Activated CD8-positive, alpha-beta T cell treated with anti-CD3 and anti-CD28 coated beads for 36 hours (primary cell): ENCODE measurements at regions of chr5 and their contacts with region 1.

Region 1: GRCh38 chr5:14415024-14415697 is 166.4 kb upstream of the OTULINL start:
- DNase-seq: peak; percentile 85
- ATAC-seq: peak; percentile 58
- H3K4me3 Mint-ChIP-seq: peak overlapping the region; percentile 67
- H3K27ac Mint-ChIP-seq: peak overlapping the region; percentile 98
- H3K4me1 Mint-ChIP-seq: peaks cover 57% of the 10 kb centered on the region
- H3K27me3 Mint-ChIP-seq: no peaks in the 10 kb centered on the region
- CTCF ChIP-seq: no peak

Region 2: GRCh38 chr5:14035859-14036440 is 379.2 kb before region 1 on chr5:
- CTCF ChIA-PET with region 1: no interaction called
- POLR2A ChIA-PET with region 1: no interaction called
- intact Hi-C with region 1: no loop called
- DNase-seq: no peak
- ATAC-seq: no peak
- H3K4me3 Mint-ChIP-seq: no peak overlapping the region
- H3K27ac Mint-ChIP-seq: no peak overlapping the region
- H3K4me1 Mint-ChIP-seq: peaks cover 3% of the 10 kb centered on the region
- H3K27me3 Mint-ChIP-seq: peaks cover 10% of the 10 kb centered on the region
- CTCF ChIP-seq: no peak

Region 3: DNA sequence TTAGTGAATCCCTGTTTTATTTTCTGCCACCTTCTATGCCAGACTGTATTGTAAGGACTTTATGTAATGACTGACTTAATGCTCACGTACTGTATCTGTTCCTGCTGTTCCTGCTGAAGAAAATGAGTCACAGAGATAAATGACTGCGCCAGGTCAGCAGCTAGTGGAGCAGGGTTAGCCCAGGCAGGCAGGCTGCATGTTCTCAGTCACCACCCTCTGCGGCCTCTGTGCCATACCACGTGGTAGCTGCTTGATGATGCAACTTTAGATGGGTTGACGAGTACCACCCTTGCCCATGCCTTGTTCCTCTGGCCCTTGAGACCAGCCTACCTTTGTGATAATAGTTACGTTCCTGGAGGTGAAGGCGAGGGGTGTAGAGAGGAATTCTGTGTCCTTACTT is 110.1 kb before region 1 on chr5:
- CTCF ChIA-PET with region 1: no interaction called
- POLR2A ChIA-PET with region 1: no interaction called
- intact Hi-C with region 1: no loop called
- DNase-seq: no peak
- ATAC-seq: no peak
- H3K4me3 Mint-ChIP-seq: no peak overlapping the region
- H3K27ac Mint-ChIP-seq: no peak overlapping the region
- H3K4me1 Mint-ChIP-seq: no peaks in the 10 kb centered on the region
- H3K27me3 Mint-ChIP-seq: peaks cover 2% of the 10 kb centered on the region
- CTCF ChIP-seq: no peak

Region 4: GRCh38 chr5:14449052-14449661 is 34.0 kb after region 1 on chr5:
- CTCF ChIA-PET with region 1: no interaction called
- POLR2A ChIA-PET with region 1: no interaction called
- intact Hi-C with region 1: no loop called
- DNase-seq: no peak
- ATAC-seq: peak; percentile 37
- H3K4me3 Mint-ChIP-seq: no peak overlapping the region
- H3K27ac Mint-ChIP-seq: no peak overlapping the region
- H3K4me1 Mint-ChIP-seq: peaks cover 13% of the 10 kb centered on the region
- H3K27me3 Mint-ChIP-seq: peaks cover 4% of the 10 kb centered on the region
- CTCF ChIP-seq: no peak

Region 5: GRCh38 chr5:14581333-14581890 is 166.3 kb after region 1 on chr5 and contains the start of gene OTULINL:
- CTCF ChIA-PET with region 1: interaction called, 6 read pairs
- POLR2A ChIA-PET with region 1: interaction called, 14 read pairs
- intact Hi-C with region 1: loop called (anchors 5 kb)
- DNase-seq: peak; percentile 90
- ATAC-seq: peak; percentile 96
- H3K4me3 Mint-ChIP-seq: peak within 1 kb of the TSS; percentile 79
- H3K27ac Mint-ChIP-seq: peak within 1 kb of the TSS; percentile 75
- H3K4me1 Mint-ChIP-seq: peaks cover 41% of the 10 kb centered on the region
- H3K27me3 Mint-ChIP-seq: peaks cover 10% of the 10 kb centered on the region
- CTCF ChIP-seq: no peak
- total RNA-seq, gene OTULINL: 19.7 to 21.1 TPM

Region 6: GRCh38 chr5:14595189-14595588 is 180.0 kb after region 1 on chr5:
- CTCF ChIA-PET with region 1: interaction called, 3 read pairs
- POLR2A ChIA-PET with region 1: interaction called, 3 read pairs
- intact Hi-C with region 1: loop called (anchors 2 kb)
- DNase-seq: peak; percentile 70
- ATAC-seq: peak; percentile 76
- H3K4me3 Mint-ChIP-seq: peak overlapping the region; percentile 65
- H3K27ac Mint-ChIP-seq: peak overlapping the region; percentile 96
- H3K4me1 Mint-ChIP-seq: peaks cover 92% of the 10 kb centered on the region
- H3K27me3 Mint-ChIP-seq: no peaks in the 10 kb centered on the region
- CTCF ChIP-seq: no peak